ENCODE measurements at regions of chr1 and their contacts with region 1.

Region 1: DNA sequence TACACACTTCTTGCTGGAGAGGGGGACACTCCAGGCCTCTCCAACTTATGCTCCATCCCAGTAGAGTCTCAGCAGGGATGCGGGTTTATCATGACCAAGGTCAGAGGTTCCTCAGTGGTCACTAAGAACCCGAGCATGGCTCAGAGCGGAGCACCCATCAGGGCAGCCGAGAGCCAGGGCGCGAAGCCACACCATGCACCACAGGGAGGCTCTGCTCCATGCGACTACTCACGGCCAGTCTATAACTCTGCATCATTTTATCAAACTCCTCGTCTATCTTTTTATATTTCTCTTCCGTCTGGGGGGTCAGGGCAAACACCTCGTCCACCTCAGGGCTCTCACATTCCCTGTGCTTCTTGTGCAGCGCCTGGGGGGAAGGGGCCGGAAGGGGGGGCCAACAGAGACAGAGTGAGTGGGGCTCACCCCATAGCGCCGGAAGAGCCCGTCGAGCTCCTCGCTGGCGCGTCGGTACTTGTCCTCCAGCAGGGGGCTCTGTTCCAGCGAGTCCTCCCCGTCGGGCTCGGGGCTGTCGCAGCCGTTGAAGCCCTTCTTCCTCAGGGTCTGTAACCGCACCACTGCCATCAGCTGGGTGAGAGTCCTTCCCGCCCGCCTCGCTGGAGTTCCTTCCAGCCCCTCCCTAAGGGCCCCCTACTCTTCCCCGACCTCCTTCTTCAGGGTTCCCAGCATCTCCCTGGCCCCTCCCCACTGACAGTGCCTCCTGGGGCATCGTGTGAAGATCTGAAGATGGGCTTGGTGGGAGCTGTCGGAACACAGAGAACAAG is 20.0 kb downstream of the MEF2D start:
- DNase-seq: peak; percentile 57
- H3K4me3 ChIP-seq: peak overlapping the region; percentile 2
- H3K27ac ChIP-seq: peak overlapping the region; percentile 75
- H3K4me1 ChIP-seq: peaks cover 100% of the 10 kb centered on the region
- H3K27me3 ChIP-seq: no peaks in the 10 kb centered on the region
- CTCF ChIP-seq: peak; percentile 78

Region 2: DNA sequence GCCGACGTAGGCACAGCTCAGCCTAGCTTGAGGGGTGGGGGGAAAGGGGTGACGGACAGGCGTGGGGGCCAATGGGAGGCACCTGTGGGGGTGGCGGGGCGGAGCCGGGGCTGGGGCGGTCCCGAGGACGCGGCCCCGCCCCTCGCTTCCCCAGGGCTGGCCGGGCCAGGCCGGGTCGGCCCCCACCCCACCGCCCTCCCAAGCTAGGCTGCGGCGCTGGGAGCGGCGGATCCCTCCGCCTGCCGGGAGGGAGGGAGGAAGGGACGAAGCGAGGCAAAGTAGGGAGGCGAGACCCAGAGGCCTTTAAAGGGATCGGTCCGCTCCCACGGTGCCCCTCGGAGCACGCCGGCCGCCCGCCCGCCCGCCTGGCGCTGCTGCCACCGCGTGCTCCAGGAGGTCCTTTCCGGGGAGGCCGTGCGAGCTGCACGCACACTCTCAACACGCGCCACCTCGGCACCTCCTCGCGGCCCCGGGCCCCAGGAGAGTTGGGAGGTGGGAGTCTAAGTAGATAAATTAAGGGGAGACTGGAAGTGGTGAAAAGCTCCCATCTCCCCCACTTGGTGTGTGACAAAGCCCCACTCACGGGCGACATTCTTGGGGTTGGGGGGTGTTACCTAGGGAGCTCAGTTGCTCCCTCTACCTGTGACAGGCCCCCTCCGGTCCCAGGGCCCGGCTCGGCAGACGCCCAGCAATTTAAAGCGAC is 20.3 kb after region 1 on chr1:
- intact Hi-C with region 1: loop called (anchors 2 kb)
- DNase-seq: peak; percentile 95
- H3K4me3 ChIP-seq: peak overlapping the region; percentile 98
- H3K27ac ChIP-seq: peak overlapping the region; percentile 100
- H3K4me1 ChIP-seq: peaks cover 93% of the 10 kb centered on the region
- H3K27me3 ChIP-seq: no peaks in the 10 kb centered on the region
- CTCF ChIP-seq: peak; percentile 62

Measured in left ventricle myocardium inferior (tissue), 1 donor.